HEK293 (cell line): ENCODE measurements at regions of chr20 and their contacts with region 1.

Region 1: GRCh38 chr20:50509935-50510705 is at the start of gene PTPN1:
- H3K4me3 ChIP-seq: peak within 1 kb of the TSS; percentile 100
- H3K27ac ChIP-seq: peak within 1 kb of the TSS; percentile 45; the same call in 1 of the 2 replicates
- H3K4me1 ChIP-seq: peaks cover 14% of the 10 kb centered on the region
- CTCF ChIP-seq: peak; percentile 79; the same call in 1 of the 2 replicates

Region 2: GRCh38 chr20:50523552-50524167 is 13.5 kb after region 1 on chr20:
- CTCF ChIA-PET with region 1: no interaction called
- POLR2A ChIA-PET with region 1: interaction called, 12 read pairs
- H3K4me3 ChIP-seq: no peak overlapping the region
- H3K27ac ChIP-seq: no peak overlapping the region
- H3K4me1 ChIP-seq: no peaks in the 10 kb centered on the region
- CTCF ChIP-seq: no peak

Region 3: GRCh38 chr20:50613438-50614169 is 103.5 kb after region 1 on chr20:
- CTCF ChIA-PET with region 1: no interaction called
- POLR2A ChIA-PET with region 1: no interaction called
- H3K4me3 ChIP-seq: no peak overlapping the region
- H3K27ac ChIP-seq: no peak overlapping the region
- H3K4me1 ChIP-seq: no peaks in the 10 kb centered on the region
- CTCF ChIP-seq: no peak